ENCODE measurements at regions of chr6 and their contacts with region 1.

Region 1: GRCh38 chr6:55047451-55048044 is 126.8 kb upstream of the HCRTR2 start:
- DNase-seq: peak; percentile 77
- ATAC-seq: peak; percentile 90
- H3K4me3 ChIP-seq: no peak overlapping the region
- H3K27ac ChIP-seq: peak overlapping the region; percentile 25; the same call in 1 of the 2 replicates
- H3K4me1 ChIP-seq: peaks cover 26% of the 10 kb centered on the region
- H3K27me3 ChIP-seq: no peaks in the 10 kb centered on the region
- CTCF ChIP-seq: no peak

Region 2: GRCh38 chr6:54681987-54682386 is 365.6 kb before region 1 on chr6:
- CTCF ChIA-PET with region 1: no interaction called
- POLR2A ChIA-PET with region 1: interaction called, 31 read pairs
- intact Hi-C with region 1: no loop called
- DNase-seq: peak; percentile 76
- ATAC-seq: peak; percentile 100
- H3K4me3 ChIP-seq: no peak overlapping the region
- H3K27ac ChIP-seq: 0 out of 2 replicates have a peak overlapping the region, but pooled peaks have one; percentile 6
- H3K4me1 ChIP-seq: peaks cover 21% of the 10 kb centered on the region
- H3K27me3 ChIP-seq: no peaks in the 10 kb centered on the region
- CTCF ChIP-seq: no peak

Region 3: DNA sequence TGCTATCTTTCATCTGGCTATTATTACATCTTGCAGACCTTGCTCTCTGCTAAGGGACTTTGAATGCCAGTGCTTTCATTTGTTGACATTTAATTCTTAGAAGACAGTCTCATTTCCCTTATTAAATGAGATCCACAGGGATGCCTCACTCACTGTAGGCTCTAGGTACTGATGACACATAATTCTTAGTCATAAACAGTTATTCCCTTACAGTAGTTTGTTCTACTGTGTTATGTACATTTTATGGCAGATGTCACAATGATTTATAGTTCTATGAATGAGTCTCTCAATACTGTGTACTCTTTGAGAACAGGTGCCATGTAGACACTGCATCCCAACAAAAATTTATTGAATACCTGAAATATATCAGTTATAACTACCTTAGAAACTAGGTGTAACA is 130.7 kb before region 1 on chr6:
- CTCF ChIA-PET with region 1: no interaction called
- POLR2A ChIA-PET with region 1: no interaction called
- intact Hi-C with region 1: loop called (anchors 2 kb)
- DNase-seq: peak; percentile 98
- ATAC-seq: peak; percentile 100
- H3K4me3 ChIP-seq: peak overlapping the region; percentile 22; the same call in 1 of the 2 replicates
- H3K27ac ChIP-seq: peak overlapping the region; percentile 50
- H3K4me1 ChIP-seq: peaks cover 16% of the 10 kb centered on the region
- H3K27me3 ChIP-seq: no peaks in the 10 kb centered on the region
- CTCF ChIP-seq: no peak

Measured in PC-3 (cell line).